GM12878 (cell line): ENCODE measurements at regions of chr4 and their contacts with region 1.

Region 1: DNA sequence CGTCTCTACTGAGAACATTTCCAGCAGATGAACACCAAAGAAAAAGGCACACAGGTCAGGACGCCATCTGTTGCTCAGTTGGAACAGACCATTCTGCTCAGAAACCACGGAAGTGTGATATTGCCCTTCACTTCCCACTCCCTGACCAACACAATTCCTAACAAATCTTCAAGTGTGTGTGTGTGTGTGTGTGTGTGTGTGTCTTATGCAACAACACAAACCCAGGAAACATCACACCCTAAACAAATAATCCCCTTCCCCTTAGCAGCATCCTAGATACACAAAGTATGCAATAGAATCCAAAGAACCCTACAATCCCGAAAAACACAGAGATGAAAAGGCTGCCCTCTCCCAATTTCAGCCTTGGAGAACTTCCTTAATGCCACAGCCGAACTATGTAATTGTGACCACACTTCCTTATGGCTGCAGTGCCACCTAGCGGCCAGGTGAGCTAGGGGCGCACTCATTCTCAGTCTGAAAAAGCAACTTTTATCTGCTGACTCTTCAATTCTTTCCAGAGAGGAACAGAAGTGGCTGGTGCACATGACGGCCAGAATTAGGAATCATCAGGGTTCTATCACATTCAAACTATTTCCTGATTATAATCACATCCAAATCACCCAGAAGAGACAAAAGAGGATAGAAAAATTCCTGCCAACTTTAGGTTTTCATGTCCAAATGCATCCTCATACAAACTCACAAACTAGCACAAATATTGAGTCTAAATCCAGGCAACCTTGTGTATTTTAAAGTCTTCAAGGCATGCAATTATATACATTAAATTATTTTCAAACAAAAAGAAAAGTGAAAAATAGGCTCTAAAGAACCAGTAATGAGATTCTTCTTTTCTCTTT is 164.9 kb downstream of the DHX15 start:
- DNase-seq: peak; percentile 12
- ATAC-seq: peak; percentile 93
- H3K4me3 ChIP-seq: no peak overlapping the region
- H3K27ac ChIP-seq: no peak overlapping the region
- H3K4me1 ChIP-seq: no peaks in the 10 kb centered on the region
- H3K27me3 ChIP-seq: no peaks in the 10 kb centered on the region; a peak in 1 of 4 replicates
- CTCF ChIP-seq: peak; percentile 90 to 98 (median 92)
- EP300 ChIP-seq: no peak
- POLR2A ChIP-seq: no peak
- RAD21 ChIP-seq: peak; percentile 95

Region 2: DNA sequence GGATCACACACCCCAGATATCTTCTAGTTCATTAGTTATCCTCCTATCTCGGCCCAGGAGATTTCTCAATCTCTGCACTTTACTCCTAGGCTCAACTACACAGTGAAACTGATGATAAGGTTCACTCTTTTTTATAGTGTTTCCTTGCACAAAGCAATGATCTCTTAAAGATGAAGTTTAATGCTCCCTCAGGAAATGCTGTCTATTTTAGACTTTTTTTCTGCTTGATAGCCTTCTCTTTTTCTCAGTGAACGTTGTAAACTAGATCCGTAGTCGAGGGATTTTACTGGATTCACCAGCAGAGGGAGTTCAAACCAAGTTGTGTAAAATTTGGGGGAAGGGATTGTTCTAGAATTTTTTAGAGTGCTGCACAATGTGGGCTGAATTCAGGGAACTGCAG is 1457.1 kb before region 1 on chr4:
- CTCF ChIA-PET with region 1: interaction called, 4 read pairs
- POLR2A ChIA-PET with region 1: no interaction called
- RAD21 ChIA-PET with region 1: no interaction called
- SMC1A ChIA-PET with region 1: no interaction called
- in situ Hi-C with region 1: no loop called
- intact Hi-C with region 1: loop called (anchors 2 kb)
- DNase-seq: no peak
- ATAC-seq: peak; percentile 60
- H3K4me3 ChIP-seq: no peak overlapping the region
- H3K27ac ChIP-seq: no peak overlapping the region
- H3K4me1 ChIP-seq: no peaks in the 10 kb centered on the region
- H3K27me3 ChIP-seq: no peaks in the 10 kb centered on the region
- CTCF ChIP-seq: peak in 1 of 3 experiments; percentile 11; a peak in 2 of 6 replicates
- EP300 ChIP-seq: no peak
- POLR2A ChIP-seq: no peak
- RAD21 ChIP-seq: peak; percentile 14; the same call in 1 of the 2 replicates

Region 3: DNA sequence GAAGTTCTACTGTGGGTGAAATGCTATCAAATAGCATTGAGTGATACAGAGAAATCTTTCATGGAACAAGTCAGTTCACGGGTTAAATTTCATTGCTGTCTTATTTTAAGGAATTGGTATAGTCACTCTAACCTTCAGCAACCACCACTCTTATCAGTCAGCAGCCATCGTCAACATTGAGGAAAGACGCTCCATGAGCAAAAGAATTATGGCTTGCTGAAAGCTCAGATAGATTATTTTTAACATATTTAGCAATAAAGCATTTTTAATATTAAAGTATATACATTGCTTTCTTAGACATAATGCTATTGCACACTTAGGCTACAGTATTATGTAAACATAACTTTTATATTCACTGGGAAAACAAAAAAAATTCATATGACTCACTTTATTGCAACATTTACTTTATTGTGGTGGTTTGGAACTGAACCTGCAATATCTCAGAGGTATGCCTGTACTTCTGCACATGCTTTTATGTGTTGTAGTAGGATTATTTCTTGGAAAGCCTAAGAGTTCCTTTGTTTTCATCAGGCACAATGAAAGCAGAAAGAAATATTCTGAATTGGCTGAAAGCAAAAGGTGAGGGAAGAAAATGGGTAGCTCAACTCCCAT is 1139.9 kb before region 1 on chr4:
- CTCF ChIA-PET with region 1: no interaction called
- POLR2A ChIA-PET with region 1: no interaction called
- RAD21 ChIA-PET with region 1: no interaction called
- SMC1A ChIA-PET with region 1: no interaction called
- in situ Hi-C with region 1: no loop called
- intact Hi-C with region 1: loop called (anchors 10 kb)
- DNase-seq: no peak
- ATAC-seq: no peak
- H3K4me3 ChIP-seq: no peak overlapping the region
- H3K27ac ChIP-seq: no peak overlapping the region
- H3K4me1 ChIP-seq: no peaks in the 10 kb centered on the region
- H3K27me3 ChIP-seq: no peaks in the 10 kb centered on the region
- CTCF ChIP-seq: no peak
- EP300 ChIP-seq: no peak
- POLR2A ChIP-seq: no peak
- RAD21 ChIP-seq: no peak

Region 4: GRCh38 chr4:24312261-24312913 is 107.0 kb before region 1 on chr4:
- CTCF ChIA-PET with region 1: no interaction called
- POLR2A ChIA-PET with region 1: no interaction called
- RAD21 ChIA-PET with region 1: no interaction called
- SMC1A ChIA-PET with region 1: no interaction called
- in situ Hi-C with region 1: no loop called
- intact Hi-C with region 1: no loop called
- DNase-seq: no peak
- ATAC-seq: no peak
- H3K4me3 ChIP-seq: no peak overlapping the region
- H3K27ac ChIP-seq: no peak overlapping the region
- H3K4me1 ChIP-seq: no peaks in the 10 kb centered on the region
- H3K27me3 ChIP-seq: no peaks in the 10 kb centered on the region
- CTCF ChIP-seq: no peak
- EP300 ChIP-seq: no peak
- POLR2A ChIP-seq: no peak
- RAD21 ChIP-seq: no peak

Region 5: DNA sequence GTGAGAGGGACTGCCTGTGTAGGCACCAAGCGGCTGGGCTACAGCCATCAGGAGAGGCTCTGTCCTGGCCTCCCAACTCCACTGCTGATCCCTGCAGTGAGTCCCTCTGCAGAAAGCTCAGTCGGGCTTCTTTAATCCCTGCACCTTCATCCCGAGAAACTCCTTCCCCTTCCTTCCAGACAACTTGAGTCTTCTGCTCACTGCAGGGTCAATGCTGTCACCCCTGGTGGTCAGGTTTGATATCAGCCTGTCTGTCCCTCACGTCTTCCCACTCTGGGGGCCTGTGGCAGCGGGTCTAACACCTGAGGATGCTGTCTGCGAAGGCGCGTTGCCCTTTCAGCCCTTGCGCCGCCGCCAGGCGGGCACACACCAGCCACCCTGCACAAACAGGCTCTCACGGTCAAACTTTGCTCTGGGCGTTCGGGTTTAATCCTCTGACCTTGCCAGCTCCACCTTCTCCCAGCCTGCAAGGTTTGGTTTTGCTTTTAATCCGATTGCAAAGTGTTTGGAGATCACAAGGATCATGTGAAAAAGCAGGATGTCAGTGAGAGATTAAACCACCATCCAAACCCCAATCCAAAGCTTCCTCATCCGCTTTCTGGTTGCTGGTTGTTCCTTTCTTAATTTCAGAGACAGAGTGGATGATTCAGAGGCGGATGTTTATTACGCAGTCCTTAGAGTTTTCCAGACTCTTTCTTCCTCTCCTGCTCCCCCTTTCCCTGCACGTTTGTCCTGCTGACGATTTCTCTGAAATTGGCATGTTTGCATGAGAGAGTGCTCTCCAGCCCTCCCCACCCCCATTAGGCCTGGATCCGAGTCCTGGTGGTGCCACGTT is 1161.4 kb after region 1 on chr4:
- CTCF ChIA-PET with region 1: no interaction called
- POLR2A ChIA-PET with region 1: no interaction called
- RAD21 ChIA-PET with region 1: no interaction called
- SMC1A ChIA-PET with region 1: no interaction called
- in situ Hi-C with region 1: no loop called
- intact Hi-C with region 1: no loop called
- DNase-seq: no peak
- ATAC-seq: no peak
- H3K4me3 ChIP-seq: no peak overlapping the region
- H3K27ac ChIP-seq: no peak overlapping the region
- H3K4me1 ChIP-seq: no peaks in the 10 kb centered on the region
- H3K27me3 ChIP-seq: no peaks in the 10 kb centered on the region
- CTCF ChIP-seq: no peak
- EP300 ChIP-seq: no peak
- POLR2A ChIP-seq: no peak
- RAD21 ChIP-seq: no peak